ENCODE measurements at regions of chr11 and their contacts with region 1.

Region 1: GRCh38 chr11:7571640-7572000 is 57.8 kb downstream of the PPFIBP2 start:
- DNase-seq: peak in 1 of 2 donors; percentile 63
- ATAC-seq: peak; percentile 60 to 67
- H3K4me3 ChIP-seq: no peak overlapping the region
- H3K27ac ChIP-seq: peak overlapping the region; percentile 27 to 62 (median 42)
- H3K4me1 ChIP-seq: peaks cover 42 to 59% of the 10 kb centered on the region in 2 donors
- H3K27me3 ChIP-seq: no peaks in the 10 kb centered on the region
- CTCF ChIP-seq: peak; percentile 89 to 97 (median 94)
- POLR2A ChIP-seq: no peak

Region 2: DNA sequence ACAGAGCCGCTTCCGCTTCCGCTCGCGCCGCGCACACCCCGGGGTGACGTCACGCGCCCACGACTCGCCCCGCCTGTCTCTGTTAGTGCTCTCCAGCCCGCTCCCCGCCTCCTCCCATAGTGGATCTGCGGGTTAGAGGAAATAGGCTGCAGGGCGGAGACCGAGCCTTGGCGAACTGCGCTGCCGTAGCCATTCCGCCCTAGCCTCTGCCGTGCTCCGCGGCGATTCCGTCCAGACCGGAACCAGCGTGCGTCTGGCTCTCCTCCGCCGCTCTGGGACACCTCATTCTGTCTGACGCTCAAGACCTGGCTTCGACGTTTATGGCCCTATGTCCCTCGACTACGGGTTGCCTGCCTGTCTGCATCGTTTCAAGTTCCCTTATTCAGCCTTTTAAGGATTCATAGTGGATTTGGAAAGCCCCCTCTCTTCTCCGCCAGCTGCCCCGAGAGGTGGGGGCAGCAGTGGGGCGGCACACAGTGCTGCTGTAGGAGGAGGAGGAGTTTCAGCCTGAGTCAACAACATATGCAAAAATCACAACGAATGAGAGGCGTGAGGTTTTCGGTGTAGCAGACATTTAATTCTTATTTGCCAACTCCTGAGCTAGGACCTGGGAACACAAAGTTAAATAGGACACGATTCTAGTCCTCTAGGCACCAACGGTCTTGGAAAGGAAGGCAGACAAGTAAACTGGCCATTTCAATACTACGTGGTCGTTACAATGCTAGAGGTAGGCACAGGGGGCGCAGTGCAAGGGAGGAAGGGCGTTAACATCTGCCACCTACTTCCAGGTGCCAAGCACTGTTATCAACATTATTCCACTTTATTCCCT is 959.2 kb before region 1 on chr11 and contains the start of gene TAF10:
- in situ Hi-C with region 1: no loop called
- intact Hi-C with region 1: loop called (anchors 10 kb)
- DNase-seq: peak; percentile 95 to 96
- ATAC-seq: peak; percentile 91 to 94
- H3K4me3 ChIP-seq: peak within 1 kb of the TSS; percentile 72 to 85 (median 78)
- H3K27ac ChIP-seq: peak within 1 kb of the TSS; percentile 92 to 100 (median 99)
- H3K4me1 ChIP-seq: peaks cover 18 to 20% of the 10 kb centered on the region in 2 donors
- H3K27me3 ChIP-seq: no peaks in the 10 kb centered on the region
- CTCF ChIP-seq: peak in 4 of 5 experiments; percentile 15 to 62 (median 37)
- POLR2A ChIP-seq: peak; percentile 92 to 94
- total RNA-seq, gene TAF10: 49.8 to 77.8 (median 65.7) TPM

Region 3: GRCh38 chr11:7548659-7549274 is 22.9 kb before region 1 on chr11:
- in situ Hi-C with region 1: no loop called
- intact Hi-C with region 1: no loop called
- DNase-seq: no peak
- ATAC-seq: no peak
- H3K4me3 ChIP-seq: no peak overlapping the region
- H3K27ac ChIP-seq: peak overlapping the region in 1 of 4 donors; percentile 20
- H3K4me1 ChIP-seq: peaks cover 53 to 65% of the 10 kb centered on the region in 2 donors
- H3K27me3 ChIP-seq: no peaks in the 10 kb centered on the region
- CTCF ChIP-seq: peak in 1 of 5 experiments; percentile 20
- POLR2A ChIP-seq: no peak

Region 4: DNA sequence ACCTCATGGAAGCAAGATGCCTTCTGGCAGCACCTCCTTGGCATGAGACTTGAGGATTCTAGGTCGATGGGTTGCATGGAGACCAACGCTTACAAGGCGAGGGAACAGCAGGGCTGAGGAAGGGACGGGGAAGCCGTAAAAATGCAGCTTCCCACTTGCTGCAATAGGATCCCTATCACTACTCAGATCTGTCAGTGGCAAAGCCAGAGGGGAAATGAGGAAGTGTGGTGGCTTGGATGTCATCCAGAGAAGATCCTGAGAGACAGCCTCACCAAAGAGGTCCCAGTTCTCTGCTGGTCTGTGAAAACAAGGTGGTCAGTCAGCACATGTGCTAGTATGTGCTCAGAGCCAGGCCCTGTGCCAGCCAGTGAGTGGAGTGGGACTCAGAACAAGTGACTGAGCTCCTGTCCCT is 79.5 kb after region 1 on chr11:
- in situ Hi-C with region 1: loop called (anchors 5 to 10 kb)
- intact Hi-C with region 1: no loop called
- DNase-seq: no peak
- ATAC-seq: no peak
- H3K4me3 ChIP-seq: no peak overlapping the region
- H3K27ac ChIP-seq: no peak overlapping the region
- H3K4me1 ChIP-seq: no peaks in the 10 kb centered on the region
- H3K27me3 ChIP-seq: no peaks in the 10 kb centered on the region
- CTCF ChIP-seq: no peak
- POLR2A ChIP-seq: no peak

Region 5: GRCh38 chr11:7657306-7658025 is 85.8 kb after region 1 on chr11:
- in situ Hi-C with region 1: loop called (anchors 5 to 10 kb)
- intact Hi-C with region 1: loop called (anchors 1 kb)
- DNase-seq: peak; percentile 45 to 62
- ATAC-seq: peak; percentile 98
- H3K4me3 ChIP-seq: no peak overlapping the region
- H3K27ac ChIP-seq: peak overlapping the region in 1 of 4 donors; percentile 54
- H3K4me1 ChIP-seq: no peaks in the 10 kb centered on the region
- H3K27me3 ChIP-seq: no peaks in the 10 kb centered on the region
- CTCF ChIP-seq: peak; percentile 22 to 60 (median 50)
- POLR2A ChIP-seq: no peak

Region 6: GRCh38 chr11:7665473-7666291 is 94.1 kb after region 1 on chr11:
- in situ Hi-C with region 1: no loop called
- intact Hi-C with region 1: loop called (anchors 2 kb)
- DNase-seq: peak; percentile 35 to 77
- ATAC-seq: peak; percentile 88 to 95
- H3K4me3 ChIP-seq: no peak overlapping the region
- H3K27ac ChIP-seq: no peak overlapping the region
- H3K4me1 ChIP-seq: no peaks in the 10 kb centered on the region
- H3K27me3 ChIP-seq: no peaks in the 10 kb centered on the region
- CTCF ChIP-seq: peak; percentile 73 to 92 (median 89)
- POLR2A ChIP-seq: no peak